ENCODE measurements at regions of chr1 and their contacts with region 1.

Region 1: GRCh38 chr1:35557292-35558063 is at the starts of genes KIAA0319L and NCDN:
- DNase-seq: peak; percentile 98
- ATAC-seq: peak; percentile 94
- total RNA-seq, gene KIAA0319L: 77.9 TPM
- total RNA-seq, gene NCDN: 24.5 TPM

Region 2: DNA sequence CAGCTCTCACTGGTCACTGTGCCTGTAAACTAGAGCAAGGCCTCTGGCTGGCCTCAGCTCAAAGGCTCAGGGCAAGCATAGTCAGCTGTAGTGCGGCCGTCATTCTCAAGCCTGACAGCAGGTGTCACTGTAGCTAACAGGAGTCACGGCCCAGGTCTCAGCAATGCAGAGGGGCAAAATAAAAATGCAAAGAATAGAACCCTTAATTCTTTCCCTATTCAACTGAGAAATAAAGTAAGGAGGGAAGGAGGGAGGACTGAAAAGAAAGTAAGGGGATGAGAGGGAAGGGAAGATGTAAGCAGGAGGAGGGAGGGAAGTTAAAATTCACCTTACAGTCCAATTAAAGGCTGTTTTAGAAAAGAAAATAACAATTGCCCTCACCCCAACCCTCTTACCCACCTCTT is 106.4 kb before region 1 on chr1:
- intact Hi-C with region 1: loop called (anchors 5 kb)
- DNase-seq: peak; percentile 88
- ATAC-seq: peak; percentile 87